GM23248 (cell line): ENCODE measurements at regions of chrX and their contacts with region 1.

Region 1: GRCh38 chrX:110146521-110146920 is 143.6 kb downstream of the TMEM164 start:
- DNase-seq: peak; percentile 47
- H3K4me3 ChIP-seq: no peak overlapping the region
- H3K27ac ChIP-seq: no peak overlapping the region
- H3K4me1 ChIP-seq: peaks cover 6% of the 10 kb centered on the region; the same call in 1 of the 2 replicates
- H3K27me3 ChIP-seq: no peaks in the 10 kb centered on the region

Region 2: GRCh38 chrX:109902665-109903064 is 243.9 kb before region 1 on chrX:
- in situ Hi-C with region 1: loop called (anchors 10 kb)
- DNase-seq: peak; percentile 56
- H3K4me3 ChIP-seq: no peak overlapping the region
- H3K27ac ChIP-seq: no peak overlapping the region
- H3K4me1 ChIP-seq: no peaks in the 10 kb centered on the region
- H3K27me3 ChIP-seq: no peaks in the 10 kb centered on the region